Right lobe of liver (tissue), 6 donors: ENCODE measurements at regions of chr19 and their contacts with region 1.

Region 1: GRCh38 chr19:9785367-9786331 is 17.1 kb upstream of the ZNF846 start:
- DNase-seq: peak; percentile 99
- ATAC-seq: peak; percentile 93 to 96 (median 94)
- H3K4me3 ChIP-seq: peak overlapping the region; percentile 55 to 75 (median 73)
- H3K27ac ChIP-seq: peak overlapping the region; percentile 81 to 92 (median 90)
- H3K4me1 ChIP-seq: peaks cover 0 to 11% (median 2%) of the 10 kb centered on the region in 4 donors
- H3K27me3 ChIP-seq: no peaks in the 10 kb centered on the region
- CTCF ChIP-seq: no peak
- POLR2A ChIP-seq: peak; percentile 84

Region 2: DNA sequence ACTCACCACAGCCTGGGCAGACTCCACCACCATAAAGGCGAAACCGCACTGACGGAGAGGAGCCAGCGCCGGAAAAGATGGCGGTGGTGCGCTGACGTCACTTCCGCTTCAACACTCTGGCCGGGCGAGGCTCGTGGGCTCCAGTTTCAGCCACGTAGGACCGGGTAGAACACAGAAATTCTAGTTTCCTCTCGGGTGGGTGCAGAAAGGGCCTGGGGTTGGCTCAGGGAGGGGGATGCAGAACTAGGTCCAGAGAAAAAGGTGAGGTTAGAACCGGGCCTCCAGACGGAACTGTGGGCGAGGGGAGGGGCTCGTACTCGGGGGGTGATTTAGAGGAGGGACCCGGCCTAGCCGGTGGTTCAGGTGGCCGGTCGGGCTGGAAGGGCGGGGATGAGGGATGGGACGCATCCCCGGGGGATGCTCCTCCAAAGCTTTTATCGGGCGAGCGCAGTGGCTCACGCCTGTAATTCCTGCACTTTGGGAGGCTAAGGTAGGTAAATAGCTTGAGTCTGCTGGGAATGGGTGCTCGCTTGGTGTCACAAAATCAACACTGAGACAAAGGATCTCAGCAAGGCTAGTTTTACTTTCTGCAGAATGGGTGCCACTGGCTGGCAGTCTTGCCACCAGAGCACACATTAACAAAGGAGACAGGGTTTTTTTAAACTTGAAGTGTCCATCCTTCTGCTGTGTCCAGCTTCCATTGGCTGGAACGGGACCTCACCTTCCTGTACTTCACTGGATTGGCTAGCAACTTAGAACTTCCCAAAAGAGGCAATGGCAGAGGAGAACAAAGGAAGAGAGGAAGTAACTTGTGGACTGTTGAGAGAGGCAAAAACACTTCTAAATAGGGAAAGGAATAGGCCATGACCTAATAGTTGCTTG is 164.3 kb before region 1 on chr19 and contains the start of gene ZNF561:
- intact Hi-C with region 1: loop called (anchors 5 kb)
- DNase-seq: peak; percentile 81 to 89 (median 87)
- ATAC-seq: peak; percentile 89 to 94 (median 92)
- H3K4me3 ChIP-seq: peak within 1 kb of the TSS; percentile 79 to 85 (median 84)
- H3K27ac ChIP-seq: peak within 1 kb of the TSS; percentile 87 to 95 (median 88)
- H3K4me1 ChIP-seq: peaks cover 0 to 14% (median 3%) of the 10 kb centered on the region in 4 donors
- H3K27me3 ChIP-seq: no peaks in the 10 kb centered on the region
- CTCF ChIP-seq: no peak
- POLR2A ChIP-seq: peak; percentile 24
- total RNA-seq, gene ZNF561: 11.4 to 19.4 (median 14.2) TPM

Region 3: DNA sequence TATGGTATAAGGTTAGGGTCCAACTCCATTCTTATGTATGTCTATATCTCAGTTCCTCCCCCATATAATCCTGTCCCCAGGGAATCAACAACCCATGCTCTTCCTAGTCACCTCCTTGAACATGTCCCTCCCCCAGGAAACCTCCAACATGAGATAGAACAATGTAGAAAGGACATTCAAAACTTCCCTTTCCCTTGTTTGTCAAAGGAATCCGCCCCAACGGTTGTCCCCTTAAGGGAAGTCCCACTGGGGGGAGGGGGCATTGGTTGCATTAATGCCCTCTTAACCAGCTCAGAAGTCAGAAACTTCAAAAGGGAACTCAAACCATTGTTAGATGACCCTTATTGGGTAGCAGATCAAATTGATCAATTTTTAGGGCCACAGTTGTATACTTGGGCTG is 157.8 kb before region 1 on chr19:
- intact Hi-C with region 1: loop called (anchors 5 kb)
- DNase-seq: no peak
- ATAC-seq: no peak
- H3K4me3 ChIP-seq: no peak overlapping the region
- H3K27ac ChIP-seq: no peak overlapping the region
- H3K4me1 ChIP-seq: peaks cover 0 to 5% (median 0%) of the 10 kb centered on the region in 4 donors
- H3K27me3 ChIP-seq: no peaks in the 10 kb centered on the region
- CTCF ChIP-seq: no peak
- POLR2A ChIP-seq: no peak